GM13977 (cell line): ENCODE measurements at regions of chr6 and their contacts with region 1.

Region 1: DNA sequence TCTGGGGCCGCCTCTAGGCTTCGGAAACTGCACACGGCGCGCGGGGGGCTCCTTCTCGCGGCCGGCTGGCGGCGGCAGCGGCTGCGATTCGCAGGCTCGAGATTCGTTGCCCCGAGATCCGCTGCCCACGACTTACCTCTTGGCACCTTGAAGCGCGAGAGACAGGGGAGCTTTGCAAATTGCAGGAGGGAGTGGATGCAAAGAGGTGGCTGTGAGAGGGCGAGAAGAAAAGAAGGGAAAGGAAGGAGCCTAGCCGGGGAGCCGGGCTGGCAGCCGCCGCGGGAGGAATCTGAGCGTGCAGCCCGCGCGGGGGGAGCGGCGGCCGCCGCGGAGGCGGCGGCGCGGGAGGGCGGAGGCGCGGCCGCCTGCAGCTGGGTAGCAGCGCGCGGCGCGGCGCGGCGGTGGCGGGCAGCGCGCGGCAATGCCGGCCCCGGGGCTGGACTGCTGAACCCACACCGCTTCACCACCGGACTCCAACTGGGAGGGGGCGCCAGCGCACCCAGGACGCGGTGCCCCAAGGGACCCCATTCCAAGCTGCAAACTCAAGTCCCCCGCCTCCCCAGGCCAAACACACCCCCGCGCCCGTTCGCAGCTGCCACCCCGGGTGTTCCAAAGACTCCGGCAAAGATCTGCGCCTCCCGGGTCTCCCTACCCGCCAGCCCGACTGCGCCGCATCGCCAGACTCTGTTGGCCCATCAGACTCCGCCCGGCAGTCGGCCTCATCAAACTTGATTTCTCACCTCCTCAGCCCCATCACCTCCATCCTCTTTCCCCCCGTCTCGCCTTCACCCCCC is 44.2 kb upstream of the SUPT3H start:
- DNase-seq: peak; percentile 50
- CTCF ChIP-seq: peak; percentile 28

Region 2: DNA sequence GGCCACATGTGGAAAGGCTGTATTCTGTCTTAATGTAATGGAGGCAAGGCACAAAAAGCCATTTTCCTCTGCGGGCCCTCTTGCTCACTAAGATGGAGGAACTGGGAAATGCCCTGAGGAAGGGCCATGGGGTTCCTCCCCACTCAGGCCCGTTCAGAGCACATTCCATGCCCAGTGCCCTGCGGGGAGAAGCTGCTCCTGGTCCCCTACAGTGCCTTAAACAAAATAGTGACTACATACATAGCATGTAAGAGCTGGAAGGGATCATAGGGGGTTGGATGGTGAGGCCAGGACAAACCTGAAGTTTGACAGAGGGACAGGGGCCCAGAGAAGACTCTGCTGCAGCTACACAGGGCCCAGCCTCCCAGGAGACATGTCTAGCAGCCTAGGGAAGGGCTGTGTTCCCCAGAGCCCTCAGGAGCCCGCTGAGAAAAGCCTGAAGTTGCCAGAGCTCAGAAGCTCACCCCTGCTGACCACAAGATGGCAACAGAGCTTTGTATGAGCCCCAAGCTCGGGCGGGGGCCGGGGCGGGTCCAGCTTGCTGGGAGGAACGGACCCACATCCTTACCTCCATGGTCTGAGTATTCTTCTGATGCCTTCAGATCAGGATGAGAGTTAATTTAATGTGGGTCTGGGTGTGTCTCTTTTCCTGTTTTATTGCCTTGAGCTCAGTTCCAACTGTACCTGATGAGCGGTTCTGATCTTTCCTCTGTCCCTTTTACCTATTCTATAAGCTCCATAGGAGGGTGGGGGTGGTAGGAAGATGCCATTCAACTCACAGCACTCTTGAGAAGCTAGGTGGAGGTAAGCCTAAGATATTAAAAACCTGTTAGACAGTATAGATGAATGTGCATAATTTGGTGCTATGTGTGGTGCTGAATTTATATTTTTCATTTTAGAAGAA is 791.5 kb before region 1 on chr6:
- in situ Hi-C with region 1: loop called (anchors 25 kb)
- DNase-seq: peak; percentile 57
- CTCF ChIP-seq: peak; percentile 37

Region 3: DNA sequence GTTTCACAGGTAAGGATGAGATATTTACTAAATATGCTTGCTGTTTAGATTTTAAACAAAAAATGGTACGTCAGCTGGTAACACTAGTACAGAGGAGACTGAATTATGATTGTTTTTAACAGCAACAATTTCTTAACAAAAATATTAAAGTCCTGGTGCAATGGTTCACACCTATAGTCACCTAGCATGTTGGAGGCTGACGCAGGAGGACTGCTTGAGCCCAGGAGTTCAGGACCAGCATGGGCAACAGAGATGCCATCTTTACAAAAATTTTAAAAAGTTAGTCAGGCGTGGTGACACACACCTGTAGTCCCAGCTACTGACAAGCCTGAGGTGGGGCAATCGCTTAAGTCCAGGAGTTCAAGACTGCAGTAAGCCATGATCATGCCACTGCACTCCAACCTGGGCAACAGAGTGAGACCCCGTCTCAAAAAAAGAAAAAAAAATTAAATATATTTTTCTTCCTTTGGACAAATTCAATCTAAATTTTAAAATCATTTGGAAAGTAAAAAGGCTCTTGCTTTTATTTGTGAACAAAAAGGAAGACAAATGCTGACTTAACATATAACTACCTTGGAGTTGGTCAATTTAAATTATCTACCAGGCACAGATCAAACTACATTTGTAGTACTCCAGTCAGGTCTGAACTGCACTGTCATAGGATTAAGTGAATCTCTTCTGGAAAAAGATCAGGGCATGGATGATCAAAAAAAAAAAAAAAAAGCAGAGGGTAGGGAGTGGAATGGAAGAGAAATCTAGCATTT is 132.0 kb before region 1 on chr6:
- in situ Hi-C with region 1: no loop called
- DNase-seq: no peak
- CTCF ChIP-seq: no peak

Region 4: DNA sequence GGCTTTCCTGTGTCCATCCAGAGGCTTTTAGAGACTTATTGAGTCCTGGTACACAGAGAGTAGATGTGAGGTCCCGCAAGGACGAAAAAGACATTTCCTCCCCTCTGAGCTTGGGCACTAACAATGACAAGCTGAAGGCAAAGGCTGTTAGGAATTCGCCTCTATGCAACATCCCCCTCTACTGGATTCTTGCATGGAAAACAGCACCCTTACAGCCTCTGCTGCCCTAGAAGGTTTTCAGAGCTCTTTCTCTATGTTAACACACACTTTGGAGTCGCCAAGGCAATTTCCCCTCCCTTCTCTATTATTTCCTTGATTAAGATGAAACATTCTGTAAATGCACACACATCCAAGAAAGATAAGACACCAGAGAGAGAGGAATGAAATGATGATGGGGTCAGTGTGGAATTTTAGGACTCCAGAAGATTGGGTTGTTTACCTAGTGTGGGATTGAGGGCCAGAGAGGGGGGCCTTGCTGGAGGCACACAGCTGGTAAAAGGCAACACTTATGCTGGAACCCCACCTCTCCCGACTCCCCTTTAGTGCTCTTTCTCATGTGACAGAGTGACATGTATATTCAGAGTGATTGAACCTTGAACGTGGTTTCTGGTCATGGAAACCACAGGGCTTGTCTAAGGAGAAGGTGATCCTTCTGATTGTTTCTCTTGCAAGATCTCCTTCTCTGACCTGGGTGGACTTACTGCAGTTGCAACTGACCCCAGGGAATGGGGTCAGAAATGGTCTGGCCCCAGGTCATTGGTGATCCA is 293.0 kb after region 1 on chr6:
- in situ Hi-C with region 1: loop called (anchors 10 kb)
- DNase-seq: peak; percentile 57
- CTCF ChIP-seq: peak; percentile 77